B cell (primary cell): ENCODE measurements at regions of chr13 and their contacts with region 1.

Region 1: GRCh38 chr13:28792992-28793391 is 27.1 kb upstream of the MTUS2 start:
- DNase-seq: no peak
- ATAC-seq: no peak
- H3K4me3 ChIP-seq: no peak overlapping the region
- H3K4me3 Mint-ChIP-seq: no peak overlapping the region
- H3K27ac ChIP-seq: no peak overlapping the region
- H3K27ac Mint-ChIP-seq: no peak overlapping the region
- H3K4me1 ChIP-seq: peaks cover 0 to 5% of the 10 kb centered on the region in 2 donors
- H3K4me1 Mint-ChIP-seq: peaks cover 3% of the 10 kb centered on the region
- H3K27me3 ChIP-seq: peaks cover 0 to 9% (median 2%) of the 10 kb centered on the region in 4 experiments
- H3K27me3 Mint-ChIP-seq: peaks cover 48% of the 10 kb centered on the region
- CTCF ChIP-seq: no peak

Region 2: DNA sequence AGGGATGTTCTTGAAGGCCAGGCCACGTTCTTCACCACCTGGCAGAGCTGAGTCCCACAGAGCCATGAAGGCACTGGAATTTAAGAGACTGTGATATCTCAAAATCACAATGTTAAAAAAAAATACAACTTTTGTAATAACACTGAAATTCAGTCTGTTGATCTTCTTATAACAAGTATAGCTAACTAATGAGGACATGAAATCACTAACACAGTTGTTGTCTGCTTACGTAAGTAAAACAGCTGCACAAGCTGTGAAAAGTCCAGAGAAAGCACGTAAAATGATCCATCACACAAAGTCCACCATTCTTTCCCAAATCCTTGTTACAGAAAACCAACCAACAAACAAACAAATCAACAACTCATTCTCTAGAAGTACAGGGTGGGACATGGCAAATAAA is 725.5 kb before region 1 on chr13:
- CTCF ChIA-PET with region 1: no interaction called
- POLR2A ChIA-PET with region 1: no interaction called
- intact Hi-C with region 1: loop called (anchors 10 kb)
- DNase-seq: no peak
- ATAC-seq: no peak
- H3K4me3 ChIP-seq: no peak overlapping the region
- H3K4me3 Mint-ChIP-seq: no peak overlapping the region
- H3K27ac ChIP-seq: no peak overlapping the region
- H3K27ac Mint-ChIP-seq: no peak overlapping the region
- H3K4me1 ChIP-seq: no peaks in the 10 kb centered on the region
- H3K4me1 Mint-ChIP-seq: no peaks in the 10 kb centered on the region
- H3K27me3 ChIP-seq: no peaks in the 10 kb centered on the region
- H3K27me3 Mint-ChIP-seq: no peaks in the 10 kb centered on the region
- CTCF ChIP-seq: no peak

Region 3: GRCh38 chr13:28922341-28922740 is 129.3 kb after region 1 on chr13:
- CTCF ChIA-PET with region 1: no interaction called
- POLR2A ChIA-PET with region 1: no interaction called
- intact Hi-C with region 1: no loop called
- DNase-seq: no peak
- ATAC-seq: no peak
- H3K4me3 ChIP-seq: no peak overlapping the region
- H3K4me3 Mint-ChIP-seq: no peak overlapping the region
- H3K27ac ChIP-seq: no peak overlapping the region
- H3K27ac Mint-ChIP-seq: no peak overlapping the region
- H3K4me1 ChIP-seq: no peaks in the 10 kb centered on the region
- H3K4me1 Mint-ChIP-seq: no peaks in the 10 kb centered on the region
- H3K27me3 ChIP-seq: no peaks in the 10 kb centered on the region
- H3K27me3 Mint-ChIP-seq: no peaks in the 10 kb centered on the region
- CTCF ChIP-seq: no peak